Prostate gland (tissue), 2 donors: ENCODE measurements at regions of chr5 and their contacts with region 1.

Region 1: DNA sequence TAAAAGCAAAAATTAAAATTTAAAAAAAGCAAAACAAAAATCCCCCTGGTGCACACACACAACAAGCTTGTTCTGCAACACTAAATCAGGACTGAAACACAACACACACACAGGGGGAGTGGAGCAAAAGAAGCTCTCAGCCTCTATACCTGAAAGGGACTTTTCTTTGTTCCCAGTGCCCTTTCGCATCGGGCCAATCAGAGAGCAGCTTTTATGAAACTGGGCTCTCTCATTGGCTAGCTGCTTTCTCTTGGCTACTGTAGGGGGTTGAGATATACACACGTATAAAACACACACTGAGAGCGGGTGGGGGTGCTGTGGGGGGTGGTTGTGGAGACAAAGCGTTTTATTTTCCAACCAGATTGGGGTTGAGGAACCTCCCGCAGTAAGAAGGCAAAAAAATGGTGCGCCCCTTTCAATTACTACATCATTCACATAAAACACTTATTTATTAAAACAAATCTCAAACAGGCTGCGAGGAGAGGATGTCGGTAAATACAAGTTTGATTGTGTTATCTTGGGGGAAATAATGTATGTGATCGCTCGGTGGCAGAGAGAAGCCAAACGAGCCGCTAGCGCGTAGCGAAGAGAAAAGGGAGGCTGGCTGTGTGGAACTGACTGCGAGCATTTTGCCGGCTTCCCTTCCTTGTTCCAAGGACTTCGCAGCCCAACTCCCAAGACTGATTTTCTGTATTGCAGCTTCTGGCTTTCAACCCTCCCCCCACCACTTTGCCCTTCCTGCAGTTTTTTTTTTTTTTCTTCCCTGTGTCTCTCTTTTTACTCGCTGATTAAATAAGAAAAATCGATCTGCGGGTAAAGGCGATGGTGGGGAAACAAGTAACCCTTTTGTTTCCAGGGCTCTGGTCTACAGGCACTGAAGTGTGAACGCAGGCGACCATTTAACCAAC is 2.5 kb upstream of the ZNF608 start:
- DNase-seq: peak; percentile 93
- H3K4me3 ChIP-seq: peak overlapping the region; percentile 33 to 49
- H3K27ac ChIP-seq: peak overlapping the region; percentile 83 to 87
- H3K4me1 ChIP-seq: peaks cover 3% of the 10 kb centered on the region
- H3K27me3 ChIP-seq: no peaks in the 10 kb centered on the region
- CTCF ChIP-seq: no peak
- POLR2A ChIP-seq: peak; percentile 51

Region 2: GRCh38 chr5:124402144-124402581 is 346.8 kb before region 1 on chr5:
- intact Hi-C with region 1: loop called (anchors 5 kb)
- DNase-seq: peak; percentile 75
- H3K4me3 ChIP-seq: no peak overlapping the region
- H3K27ac ChIP-seq: no peak overlapping the region
- H3K4me1 ChIP-seq: no peaks in the 10 kb centered on the region
- H3K27me3 ChIP-seq: no peaks in the 10 kb centered on the region
- CTCF ChIP-seq: no peak
- POLR2A ChIP-seq: no peak

Region 3: DNA sequence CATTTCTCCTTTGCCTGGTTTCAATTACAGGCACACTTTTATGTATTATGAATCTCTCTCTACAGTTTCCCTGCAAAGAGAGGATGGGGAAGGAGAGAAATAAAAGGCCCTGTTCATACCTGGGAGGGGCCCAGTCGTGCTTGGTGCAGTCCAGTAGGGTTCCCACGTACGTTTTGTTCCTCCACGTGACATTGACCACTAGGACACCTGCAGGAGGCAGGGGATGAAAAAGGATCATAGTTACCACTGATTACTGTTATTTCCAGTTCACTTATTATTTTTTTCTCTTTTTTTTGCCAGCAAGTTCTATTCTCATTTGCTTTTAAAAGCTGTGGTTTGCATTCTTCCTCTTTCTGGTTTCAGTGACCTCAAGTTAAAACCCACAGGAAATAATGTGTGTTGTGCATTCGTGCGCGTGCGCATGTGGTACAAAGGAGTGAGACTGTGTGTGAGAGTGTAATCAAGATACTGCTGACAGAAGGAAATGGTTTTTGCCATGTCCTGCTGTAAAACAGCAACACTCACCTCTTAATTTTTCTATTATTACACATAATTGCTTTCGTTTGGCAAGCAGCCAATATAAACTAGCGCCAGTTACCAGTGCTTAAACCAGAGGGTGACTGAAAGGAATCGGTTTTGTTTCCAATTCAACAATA is 99.3 kb before region 1 on chr5:
- intact Hi-C with region 1: loop called (anchors 5 kb)
- DNase-seq: no peak
- H3K4me3 ChIP-seq: no peak overlapping the region
- H3K27ac ChIP-seq: no peak overlapping the region
- H3K4me1 ChIP-seq: no peaks in the 10 kb centered on the region
- H3K27me3 ChIP-seq: no peaks in the 10 kb centered on the region
- CTCF ChIP-seq: no peak
- POLR2A ChIP-seq: no peak